ENCODE measurements at regions of chr18 and their contacts with region 1.

Region 1: DNA sequence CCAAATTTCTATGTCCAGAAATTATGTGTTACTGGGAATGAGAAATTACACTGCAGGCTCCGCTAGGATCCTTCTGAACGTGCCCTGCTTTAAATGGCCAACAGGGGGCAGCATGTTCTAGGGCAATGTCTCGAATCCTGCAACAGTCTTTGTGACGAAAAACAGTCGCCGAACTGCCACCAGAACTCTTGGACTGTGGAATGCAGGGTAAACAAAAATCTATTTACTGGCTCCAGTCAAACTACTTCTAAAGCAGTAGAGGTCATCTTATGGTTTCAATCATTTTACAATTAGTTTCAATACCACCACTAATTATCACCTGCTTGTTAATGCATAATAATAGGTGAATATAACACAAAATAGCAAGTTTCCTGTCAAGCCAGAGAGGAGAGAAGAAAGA is 9.8 kb upstream of the ZNF397 start:
- DNase-seq: peak in 1 of 2 donors; percentile 90
- H3K4me3 ChIP-seq: no peak overlapping the region
- H3K27ac ChIP-seq: no peak overlapping the region
- H3K4me1 ChIP-seq: no peaks in the 10 kb centered on the region
- H3K27me3 ChIP-seq: no peaks in the 10 kb centered on the region
- CTCF ChIP-seq: peak; percentile 75 to 92 (median 89)

Region 2: GRCh38 chr18:35071819-35072247 is 159.2 kb before region 1 on chr18:
- intact Hi-C with region 1: no loop called
- DNase-seq: no peak
- H3K4me3 ChIP-seq: no peak overlapping the region
- H3K27ac ChIP-seq: peak overlapping the region; percentile 55 to 69
- H3K4me1 ChIP-seq: peaks cover 6 to 38% of the 10 kb centered on the region in 2 donors
- H3K27me3 ChIP-seq: no peaks in the 10 kb centered on the region
- CTCF ChIP-seq: no peak

Region 3: DNA sequence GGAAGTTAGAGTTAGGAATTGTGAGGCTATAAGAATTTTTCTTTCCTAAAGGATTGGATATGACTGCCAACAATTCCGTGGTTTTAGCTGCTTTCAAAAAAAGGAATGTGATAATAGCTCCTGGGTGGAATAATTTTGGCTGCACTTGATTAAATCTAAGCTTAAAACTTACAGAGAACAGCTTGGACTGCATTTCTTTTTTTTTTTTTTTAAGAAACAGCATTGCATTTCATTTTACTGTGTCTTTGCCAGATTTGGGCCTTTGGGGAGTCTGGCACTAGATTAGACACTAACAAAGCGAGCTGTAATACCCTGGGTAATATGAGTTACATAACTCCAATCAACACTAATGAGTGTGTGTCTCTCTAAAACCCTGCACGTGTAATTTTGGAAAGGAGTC is 28.0 kb before region 1 on chr18:
- intact Hi-C with region 1: no loop called
- DNase-seq: no peak
- H3K4me3 ChIP-seq: no peak overlapping the region
- H3K27ac ChIP-seq: no peak overlapping the region
- H3K4me1 ChIP-seq: no peaks in the 10 kb centered on the region
- H3K27me3 ChIP-seq: no peaks in the 10 kb centered on the region
- CTCF ChIP-seq: no peak

Region 4: DNA sequence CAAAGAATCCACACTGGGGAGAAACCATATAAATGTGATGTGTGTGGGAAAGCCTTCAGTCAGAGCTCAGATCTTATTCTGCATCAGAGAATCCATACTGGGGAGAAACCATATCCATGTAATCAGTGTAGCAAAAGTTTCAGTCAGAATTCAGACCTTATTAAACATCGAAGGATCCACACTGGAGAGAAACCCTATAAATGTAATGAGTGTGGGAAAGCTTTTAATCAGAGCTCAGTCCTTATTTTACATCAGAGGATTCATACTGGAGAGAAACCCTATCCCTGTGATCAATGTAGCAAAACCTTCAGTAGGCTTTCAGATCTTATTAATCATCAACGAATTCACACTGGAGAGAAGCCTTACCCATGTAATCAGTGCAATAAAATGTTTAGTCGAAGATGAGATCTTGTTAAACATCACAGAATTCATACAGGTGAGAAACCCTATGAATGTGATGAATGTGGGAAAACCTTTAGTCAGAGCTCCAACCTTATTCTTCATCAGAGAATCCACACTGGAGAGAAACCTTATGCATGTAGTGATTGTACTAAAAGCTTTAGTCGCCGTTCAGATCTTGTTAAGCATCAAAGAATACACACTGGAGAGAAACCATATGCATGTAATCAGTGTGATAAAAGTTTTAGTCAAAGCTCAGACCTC is 75.7 kb after region 1 on chr18:
- intact Hi-C with region 1: no loop called
- DNase-seq: no peak
- H3K4me3 ChIP-seq: no peak overlapping the region
- H3K27ac ChIP-seq: no peak overlapping the region
- H3K4me1 ChIP-seq: no peaks in the 10 kb centered on the region
- H3K27me3 ChIP-seq: no peaks in the 10 kb centered on the region
- CTCF ChIP-seq: no peak

Region 5: DNA sequence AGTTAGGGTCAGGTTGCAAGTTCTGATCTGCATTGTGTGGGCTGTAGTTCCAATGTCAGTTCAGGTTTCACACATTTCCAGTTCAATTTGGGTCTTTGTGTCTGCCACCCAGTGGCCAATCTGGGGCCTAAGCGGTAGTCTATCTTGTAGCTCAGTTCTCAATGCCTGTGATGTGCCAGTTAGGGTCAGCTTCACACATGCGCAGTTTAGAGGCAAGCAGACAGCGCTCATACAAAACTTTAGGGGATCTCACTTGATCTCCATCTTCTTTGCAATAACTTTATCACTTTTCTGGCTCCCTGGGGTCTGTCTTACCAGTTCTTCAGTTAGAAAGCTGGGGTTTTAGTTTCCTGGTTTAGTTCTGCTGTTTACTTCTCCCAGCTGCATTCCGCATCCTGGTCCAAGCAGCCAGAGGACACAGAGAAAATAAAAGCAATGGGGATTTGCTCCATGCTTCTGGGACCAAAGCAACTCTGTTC is 124.1 kb after region 1 on chr18:
- intact Hi-C with region 1: loop called (anchors 1 kb)
- DNase-seq: peak; percentile 13 to 87
- H3K4me3 ChIP-seq: peak overlapping the region in 1 of 2 donors; percentile 43
- H3K27ac ChIP-seq: peak overlapping the region; percentile 17 to 39
- H3K4me1 ChIP-seq: no peaks in the 10 kb centered on the region
- H3K27me3 ChIP-seq: no peaks in the 10 kb centered on the region
- CTCF ChIP-seq: peak; percentile 49 to 72 (median 70)

Region 6: GRCh38 chr18:35730691-35731370 is 499.8 kb after region 1 on chr18:
- intact Hi-C with region 1: no loop called
- DNase-seq: no peak
- H3K4me3 ChIP-seq: peak overlapping the region in 1 of 2 donors; percentile 30
- H3K27ac ChIP-seq: no peak overlapping the region
- H3K4me1 ChIP-seq: no peaks in the 10 kb centered on the region
- H3K27me3 ChIP-seq: no peaks in the 10 kb centered on the region
- CTCF ChIP-seq: no peak

Measured in ascending aorta (tissue), 2 donors.